Caco-2 (cell line): ENCODE measurements at regions of chr13 and their contacts with region 1.

Region 1: DNA sequence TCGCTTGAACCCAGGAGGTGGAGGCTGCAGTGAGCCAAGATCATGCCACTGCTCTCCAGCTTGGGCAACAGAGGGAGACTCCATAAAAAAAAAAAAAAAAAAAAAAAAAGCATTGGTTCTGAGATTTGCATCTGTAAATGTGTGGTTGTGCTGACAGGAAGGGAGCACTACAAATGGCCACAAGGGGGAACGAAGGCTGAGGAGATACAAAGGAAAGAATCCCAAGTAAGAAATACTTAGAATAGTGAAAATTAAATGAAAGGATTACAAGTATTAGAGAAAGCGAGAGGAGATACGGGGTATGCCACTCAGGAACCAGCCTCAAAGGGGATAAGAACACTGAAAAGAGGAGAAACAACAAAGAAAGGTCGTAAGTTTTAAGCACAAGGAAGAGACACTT is 284.9 kb downstream of the KLF12 start:
- DNase-seq: peak; percentile 52 to 56
- H3K4me3 ChIP-seq: no peak overlapping the region
- H3K4me3 Mint-ChIP-seq: no peak overlapping the region
- H3K27ac Mint-ChIP-seq: no peak overlapping the region
- H3K4me1 ChIP-seq: no peaks in the 10 kb centered on the region
- H3K4me1 Mint-ChIP-seq: peaks cover 7% of the 10 kb centered on the region
- H3K27me3 ChIP-seq: no peaks in the 10 kb centered on the region
- H3K27me3 Mint-ChIP-seq: no peaks in the 10 kb centered on the region
- CTCF ChIP-seq: peak; percentile 32 to 68

Region 2: DNA sequence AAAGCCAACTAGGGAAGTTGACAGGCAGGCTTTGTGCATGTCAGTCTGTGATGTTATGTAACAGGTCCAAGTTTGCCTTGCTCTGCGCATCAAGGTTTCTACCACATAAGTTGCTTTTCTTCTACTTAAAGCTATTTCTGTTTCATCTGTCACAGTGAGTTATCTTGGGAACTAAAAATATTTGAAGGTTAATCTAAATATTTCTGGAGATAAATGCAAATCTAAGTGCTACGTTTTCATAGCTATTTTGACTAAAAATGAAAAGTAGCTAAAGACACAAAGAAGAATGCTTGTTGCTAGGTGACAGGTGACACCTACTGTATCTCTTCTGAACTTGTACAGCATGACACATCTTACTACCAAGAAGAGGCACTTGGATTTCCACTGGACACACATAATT is 149.3 kb after region 1 on chr13:
- CTCF ChIA-PET with region 1: interaction called, 13 read pairs
- POLR2A ChIA-PET with region 1: no interaction called
- intact Hi-C with region 1: no loop called
- DNase-seq: no peak
- H3K4me3 ChIP-seq: no peak overlapping the region
- H3K4me3 Mint-ChIP-seq: no peak overlapping the region
- H3K27ac Mint-ChIP-seq: no peak overlapping the region
- H3K4me1 ChIP-seq: peaks cover 5% of the 10 kb centered on the region; the same call in 1 of the 2 replicates
- H3K4me1 Mint-ChIP-seq: peaks cover 4% of the 10 kb centered on the region
- H3K27me3 ChIP-seq: no peaks in the 10 kb centered on the region
- H3K27me3 Mint-ChIP-seq: no peaks in the 10 kb centered on the region
- CTCF ChIP-seq: no peak

Region 3: GRCh38 chr13:74026753-74027152 is 177.5 kb after region 1 on chr13:
- CTCF ChIA-PET with region 1: no interaction called
- POLR2A ChIA-PET with region 1: no interaction called
- intact Hi-C with region 1: no loop called
- DNase-seq: no peak
- H3K4me3 ChIP-seq: no peak overlapping the region
- H3K4me3 Mint-ChIP-seq: no peak overlapping the region
- H3K27ac Mint-ChIP-seq: peak overlapping the region; percentile 75
- H3K4me1 ChIP-seq: peaks cover 80% of the 10 kb centered on the region
- H3K4me1 Mint-ChIP-seq: peaks cover 72% of the 10 kb centered on the region
- H3K27me3 ChIP-seq: no peaks in the 10 kb centered on the region
- H3K27me3 Mint-ChIP-seq: no peaks in the 10 kb centered on the region
- CTCF ChIP-seq: no peak

Region 4: GRCh38 chr13:74040200-74040599 is 190.9 kb after region 1 on chr13:
- CTCF ChIA-PET with region 1: no interaction called
- POLR2A ChIA-PET with region 1: no interaction called
- intact Hi-C with region 1: loop called (anchors 2 kb)
- DNase-seq: peak; percentile 76 to 79
- H3K4me3 ChIP-seq: no peak overlapping the region
- H3K4me3 Mint-ChIP-seq: no peak overlapping the region
- H3K27ac Mint-ChIP-seq: no peak overlapping the region
- H3K4me1 ChIP-seq: peaks cover 22% of the 10 kb centered on the region
- H3K4me1 Mint-ChIP-seq: peaks cover 22% of the 10 kb centered on the region
- H3K27me3 ChIP-seq: no peaks in the 10 kb centered on the region
- H3K27me3 Mint-ChIP-seq: no peaks in the 10 kb centered on the region
- CTCF ChIP-seq: peak; percentile 79 to 87